ENCODE measurements at regions of chr18 and their contacts with region 1.

Region 1: DNA sequence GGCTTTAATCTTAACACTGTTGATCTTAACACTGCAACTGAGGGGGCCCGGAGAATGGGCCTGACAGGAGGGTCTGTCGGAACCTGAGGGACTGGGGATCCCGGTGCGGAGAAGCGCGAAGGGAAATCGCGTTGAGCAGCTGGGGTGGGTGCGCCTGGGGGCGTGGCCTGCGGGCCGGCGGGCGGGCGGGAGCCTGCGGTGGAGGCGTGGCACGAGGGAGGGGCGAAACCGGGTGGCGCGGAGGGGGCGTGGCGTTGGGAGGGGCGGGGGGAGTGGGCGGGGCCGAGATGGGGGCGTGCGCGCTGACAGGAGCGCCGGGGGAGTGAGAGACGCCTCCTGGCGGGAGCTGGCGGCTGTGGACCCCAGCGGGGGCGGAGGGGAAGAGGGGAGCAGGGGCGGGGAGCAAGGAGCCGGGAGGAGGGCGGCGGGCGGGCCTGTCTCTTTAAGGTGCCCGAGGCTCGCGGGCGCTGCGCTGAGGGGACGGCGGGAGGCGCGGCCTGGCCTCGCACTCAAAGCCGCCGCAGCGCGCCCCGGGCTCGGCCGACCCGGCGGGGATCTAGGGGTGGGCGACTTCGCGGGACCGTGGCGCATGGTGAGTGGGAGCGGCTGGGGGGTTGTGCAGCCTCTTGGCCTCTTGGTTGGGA is at the start of gene TWSG1:
- DNase-seq: peak; percentile 92 to 95
- ATAC-seq: peak; percentile 95 to 98 (median 96)
- H3K4me3 ChIP-seq: peak within 1 kb of the TSS; percentile 58 to 95 (median 78)
- H3K27ac ChIP-seq: peak within 1 kb of the TSS in 9 of 10 donors; percentile 29 to 88 (median 80)
- H3K4me1 ChIP-seq: peaks cover 0 to 27% (median 16%) of the 10 kb centered on the region in 9 donors
- H3K27me3 ChIP-seq: peaks cover 0 to 4% (median 0%) of the 10 kb centered on the region in 7 donors
- CTCF ChIP-seq: peak in 7 of 9 donors; percentile 33 to 63 (median 51)
- total RNA-seq, gene TWSG1: 7.4 to 15.0 (median 12.0) TPM

Region 2: GRCh38 chr18:9066817-9067306 is 267.6 kb before region 1 on chr18:
- intact Hi-C with region 1: loop called in 4 of 10 experiments (anchors 5 to 10 kb)
- DNase-seq: no peak
- ATAC-seq: no peak
- H3K4me3 ChIP-seq: no peak overlapping the region
- H3K27ac ChIP-seq: no peak overlapping the region
- H3K4me1 ChIP-seq: peaks cover 0 to 20% (median 7%) of the 10 kb centered on the region in 9 donors
- H3K27me3 ChIP-seq: no peaks in the 10 kb centered on the region
- CTCF ChIP-seq: no peak

Region 3: DNA sequence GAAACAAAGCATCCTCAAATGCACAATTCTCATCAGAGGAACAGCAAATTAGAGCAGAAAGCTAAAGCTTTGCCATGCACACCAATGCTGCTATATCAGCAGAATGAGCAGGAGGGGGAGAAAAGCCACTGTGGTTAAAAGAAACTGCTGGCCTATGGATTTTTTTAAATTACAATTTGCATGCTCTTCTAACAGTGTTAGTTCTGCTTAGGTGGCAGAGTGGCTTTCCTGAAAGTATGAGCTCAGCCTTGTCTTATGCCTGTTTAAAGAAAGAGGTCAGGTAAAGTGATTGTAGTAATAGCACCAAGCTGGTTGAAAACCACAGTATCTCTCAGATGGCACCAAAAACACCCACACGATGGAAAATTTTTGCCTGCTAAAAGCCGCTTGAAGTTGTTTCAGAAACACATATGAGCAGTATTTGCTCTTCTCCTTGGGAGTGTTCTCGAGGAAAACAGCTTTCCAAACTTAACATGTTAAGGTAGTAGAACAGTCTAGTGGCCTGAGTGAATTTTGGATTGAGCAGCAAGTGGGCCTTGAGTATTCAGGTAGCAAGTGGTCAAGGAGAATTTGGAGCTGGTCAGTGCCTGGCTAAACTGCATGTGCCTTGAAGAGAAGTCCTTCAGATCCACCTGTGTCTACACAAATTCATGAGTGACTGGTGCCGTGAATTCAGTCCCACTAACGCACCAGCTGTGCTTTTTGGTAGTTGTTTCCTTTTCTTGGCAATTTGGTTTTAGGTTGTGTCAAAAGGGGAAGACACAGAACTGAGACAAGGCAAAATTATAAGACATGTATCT is 251.5 kb before region 1 on chr18:
- intact Hi-C with region 1: loop called in 2 of 10 experiments (anchors 10 kb)
- DNase-seq: no peak
- ATAC-seq: peak in 2 of 8 donors; percentile 56 to 57
- H3K4me3 ChIP-seq: no peak overlapping the region
- H3K27ac ChIP-seq: peak overlapping the region in 1 of 10 donors; percentile 77
- H3K4me1 ChIP-seq: peaks cover 0 to 57% (median 0%) of the 10 kb centered on the region in 9 donors
- H3K27me3 ChIP-seq: no peaks in the 10 kb centered on the region
- CTCF ChIP-seq: no peak

Region 4: DNA sequence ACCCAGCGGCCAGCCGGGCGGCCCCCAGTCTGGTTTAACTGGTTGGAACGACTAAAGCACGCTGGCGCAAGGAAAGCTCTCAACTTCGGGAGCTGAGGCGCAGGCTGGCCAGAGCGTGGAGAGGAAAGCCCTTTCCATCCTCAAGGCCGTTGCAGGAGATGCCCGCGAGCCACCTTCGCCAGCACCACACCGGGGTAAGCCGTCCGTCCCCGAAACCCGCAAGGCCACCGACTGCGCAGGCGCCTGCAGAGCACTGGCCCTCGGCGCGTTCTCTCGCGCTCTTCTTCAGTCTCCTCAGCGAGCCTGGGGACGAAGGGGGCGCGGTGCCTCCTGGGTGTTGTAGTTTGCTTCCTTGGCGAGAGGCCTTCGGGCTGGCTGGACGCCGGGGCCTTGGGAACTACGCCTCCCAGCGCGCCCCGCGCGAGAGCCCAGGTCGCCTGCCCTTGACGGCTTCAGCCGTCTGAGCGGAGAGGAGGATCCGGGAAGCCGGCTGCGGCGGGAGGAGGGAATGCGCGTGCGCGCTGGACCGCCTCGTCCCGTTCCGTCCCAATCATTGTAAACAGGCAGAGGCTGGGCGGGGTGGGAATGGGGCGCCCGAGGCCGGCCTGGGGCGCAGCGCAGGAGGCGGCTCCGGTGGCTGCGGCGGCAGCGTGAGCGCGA is 140.7 kb after region 1 on chr18 and contains the start of gene RALBP1:
- intact Hi-C with region 1: loop called in 3 of 10 experiments (anchors 2 to 5 kb)
- DNase-seq: peak; percentile 99 to 100
- ATAC-seq: peak; percentile 97 to 100 (median 99)
- H3K4me3 ChIP-seq: peak within 1 kb of the TSS; percentile 63 to 98 (median 92)
- H3K27ac ChIP-seq: peak within 1 kb of the TSS; percentile 81 to 97 (median 93)
- H3K4me1 ChIP-seq: peaks cover 0 to 29% (median 22%) of the 10 kb centered on the region in 9 donors
- H3K27me3 ChIP-seq: no peaks in the 10 kb centered on the region
- CTCF ChIP-seq: peak in 4 of 9 donors; percentile 26 to 52 (median 50)
- total RNA-seq, gene RALBP1: 39.3 to 53.8 (median 41.8) TPM

Measured in heart right ventricle (tissue), 16 donors.